ENCODE measurements at regions of chr10 and their contacts with region 1.

Region 1: GRCh38 chr10:99450624-99451498 is 20.4 kb upstream of the GOT1 start:
- DNase-seq: no peak
- H3K4me3 ChIP-seq: no peak overlapping the region
- H3K27me3 ChIP-seq: peaks cover 18% of the 10 kb centered on the region
- CTCF ChIP-seq: no peak

Region 2: GRCh38 chr10:99008054-99008453 is 442.8 kb before region 1 on chr10:
- CTCF ChIA-PET with region 1: no interaction called
- POLR2A ChIA-PET with region 1: no interaction called
- DNase-seq: peak; percentile 18
- H3K4me3 ChIP-seq: no peak overlapping the region
- H3K27me3 ChIP-seq: no peaks in the 10 kb centered on the region
- CTCF ChIP-seq: no peak

Region 3: GRCh38 chr10:99292159-99292558 is 158.7 kb before region 1 on chr10:
- CTCF ChIA-PET with region 1: no interaction called
- POLR2A ChIA-PET with region 1: no interaction called
- DNase-seq: peak; percentile 96
- H3K4me3 ChIP-seq: no peak overlapping the region
- H3K27me3 ChIP-seq: no peaks in the 10 kb centered on the region
- CTCF ChIP-seq: no peak

Region 4: DNA sequence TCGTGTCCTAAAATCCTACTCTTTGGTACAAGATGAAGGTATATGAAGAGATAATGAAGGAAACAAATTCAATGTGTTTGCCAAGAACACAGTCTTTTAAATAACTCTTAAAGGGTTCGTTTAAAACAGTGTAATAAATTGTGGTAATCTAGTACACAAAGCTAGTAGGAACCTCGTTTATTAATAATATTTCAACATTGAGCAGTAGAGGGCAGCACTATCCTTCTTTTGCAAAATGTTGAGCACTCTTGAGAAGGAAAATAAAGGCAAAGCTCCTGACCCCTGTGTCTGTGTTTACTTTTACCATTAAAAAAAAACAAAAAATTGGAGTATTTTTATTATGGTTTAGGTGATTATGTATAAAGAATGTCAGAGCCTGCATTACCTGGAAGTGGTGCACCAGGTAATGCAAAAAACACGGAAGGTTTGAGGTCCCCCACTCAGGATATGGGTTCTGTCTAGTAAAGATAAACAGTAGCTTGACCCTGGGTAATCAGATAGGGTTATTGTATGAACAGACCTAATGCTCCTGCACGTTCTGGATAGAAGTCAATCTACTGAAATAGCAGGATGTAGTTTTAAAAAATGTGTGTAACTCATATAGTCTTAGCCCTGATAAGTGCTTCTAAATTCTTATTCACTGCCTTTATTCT is 14.7 kb before region 1 on chr10:
- CTCF ChIA-PET with region 1: interaction called, 23 read pairs
- POLR2A ChIA-PET with region 1: no interaction called
- DNase-seq: peak; percentile 4
- H3K4me3 ChIP-seq: no peak overlapping the region
- H3K27me3 ChIP-seq: no peaks in the 10 kb centered on the region
- CTCF ChIP-seq: peak; percentile 52

Measured in BJ (cell line).